Posterior vena cava (tissue), 2 donors: ENCODE measurements at regions of chr19 and their contacts with region 1.

Region 1: GRCh38 chr19:48501496-48502350 is 9.9 kb downstream of the LMTK3 start:
- DNase-seq: no peak

Region 2: DNA sequence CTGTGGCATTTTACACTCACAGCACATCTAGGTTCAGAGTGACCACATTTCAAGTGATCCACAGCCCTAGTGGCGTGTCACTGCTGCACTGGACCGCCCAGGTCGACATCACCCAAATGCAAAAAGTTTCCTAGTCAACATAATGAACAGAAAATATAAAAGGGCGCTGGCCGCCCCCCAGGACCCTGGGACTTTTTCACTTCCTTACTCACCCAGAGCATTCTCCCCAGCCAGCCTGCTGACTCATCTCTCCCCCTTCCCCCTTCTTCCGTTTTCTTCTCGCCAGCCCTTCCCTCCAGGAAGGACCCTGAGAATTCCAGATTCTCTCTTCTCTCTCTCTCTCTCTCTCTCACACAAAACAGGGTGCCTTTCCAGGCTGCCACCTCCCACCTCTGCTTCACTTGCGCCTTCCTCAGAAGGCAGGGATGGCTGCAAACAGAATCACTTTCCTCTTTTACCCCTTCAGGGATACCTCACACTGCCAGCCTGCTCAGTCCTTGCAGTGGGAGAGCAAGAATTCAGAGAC is 77.0 kb before region 1 on chr19:
- intact Hi-C with region 1: no loop called
- DNase-seq: no peak

Region 3: GRCh38 chr19:48582168-48582567 is 80.4 kb after region 1 on chr19:
- intact Hi-C with region 1: loop called (anchors 5 to 10 kb)
- DNase-seq: no peak

Region 4: DNA sequence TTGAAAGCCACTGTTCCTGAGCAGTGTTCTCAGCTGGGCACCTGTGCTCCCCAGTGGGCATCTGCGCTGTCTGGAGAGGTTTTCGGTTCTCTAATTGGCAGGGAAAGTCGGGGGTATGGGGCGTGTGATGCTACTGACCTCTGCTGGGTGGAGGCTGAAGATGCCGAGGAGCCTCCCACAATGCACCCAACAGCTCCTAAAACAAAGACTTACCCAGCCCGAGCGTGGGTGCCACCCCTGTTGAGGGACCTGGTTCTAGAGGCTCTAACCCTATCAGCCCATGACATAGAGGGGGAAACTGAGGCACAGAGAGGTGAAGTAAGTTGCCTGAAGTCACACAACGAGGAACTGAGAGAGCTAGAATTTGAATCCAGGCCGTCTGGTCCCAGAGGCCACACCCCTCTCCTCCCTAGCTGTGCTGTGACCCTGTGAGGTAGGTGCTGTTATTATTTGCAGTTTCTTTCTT is 107.1 kb after region 1 on chr19:
- intact Hi-C with region 1: no loop called
- DNase-seq: peak; percentile 80